ENCODE measurements at regions of chr6 and their contacts with region 1.

Region 1: GRCh38 chr6:134640975-134641429 is 308.9 kb downstream of the ALDH8A1 start:
- DNase-seq: peak; percentile 94
- H3K4me3 ChIP-seq: no peak overlapping the region
- H3K27ac ChIP-seq: peak overlapping the region; percentile 7
- H3K4me1 ChIP-seq: peaks cover 26% of the 10 kb centered on the region
- H3K27me3 ChIP-seq: no peaks in the 10 kb centered on the region
- CTCF ChIP-seq: peak; percentile 95

Region 2: DNA sequence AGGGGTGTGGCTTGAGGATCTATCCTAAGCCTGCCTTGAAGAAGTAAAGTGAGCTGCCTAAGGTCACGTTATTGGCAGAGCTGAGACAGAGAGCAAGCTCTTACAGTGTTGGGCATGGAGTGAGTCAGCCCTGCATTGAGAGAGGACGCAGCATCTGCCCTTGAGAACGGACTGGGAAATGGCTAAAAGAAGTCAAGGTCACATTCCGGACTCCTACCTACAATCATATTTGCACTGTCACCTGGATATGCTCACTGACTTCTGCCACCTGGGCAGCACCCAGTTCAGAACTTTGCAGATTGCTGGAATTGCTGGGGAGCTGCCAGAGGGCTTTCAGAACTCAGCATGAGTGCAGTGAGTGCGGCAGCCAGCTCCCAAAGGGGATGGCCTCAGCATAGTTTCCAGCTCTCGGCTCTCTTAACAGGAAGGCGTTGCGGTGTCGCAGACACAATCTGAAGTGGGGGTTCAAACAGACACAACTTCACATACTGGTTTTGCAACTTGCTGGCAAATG is 123.8 kb before region 1 on chr6:
- CTCF ChIA-PET with region 1: no interaction called
- POLR2A ChIA-PET with region 1: no interaction called
- intact Hi-C with region 1: loop called (anchors 2 kb)
- DNase-seq: peak; percentile 91
- H3K4me3 ChIP-seq: peak overlapping the region; percentile 27
- H3K27ac ChIP-seq: peak overlapping the region; percentile 74
- H3K4me1 ChIP-seq: peaks cover 78% of the 10 kb centered on the region
- H3K27me3 ChIP-seq: no peaks in the 10 kb centered on the region
- CTCF ChIP-seq: no peak